Common myeloid progenitor, CD34-positive (primary cell): ENCODE measurements at regions of chr16 and their contacts with region 1.

Region 1: DNA sequence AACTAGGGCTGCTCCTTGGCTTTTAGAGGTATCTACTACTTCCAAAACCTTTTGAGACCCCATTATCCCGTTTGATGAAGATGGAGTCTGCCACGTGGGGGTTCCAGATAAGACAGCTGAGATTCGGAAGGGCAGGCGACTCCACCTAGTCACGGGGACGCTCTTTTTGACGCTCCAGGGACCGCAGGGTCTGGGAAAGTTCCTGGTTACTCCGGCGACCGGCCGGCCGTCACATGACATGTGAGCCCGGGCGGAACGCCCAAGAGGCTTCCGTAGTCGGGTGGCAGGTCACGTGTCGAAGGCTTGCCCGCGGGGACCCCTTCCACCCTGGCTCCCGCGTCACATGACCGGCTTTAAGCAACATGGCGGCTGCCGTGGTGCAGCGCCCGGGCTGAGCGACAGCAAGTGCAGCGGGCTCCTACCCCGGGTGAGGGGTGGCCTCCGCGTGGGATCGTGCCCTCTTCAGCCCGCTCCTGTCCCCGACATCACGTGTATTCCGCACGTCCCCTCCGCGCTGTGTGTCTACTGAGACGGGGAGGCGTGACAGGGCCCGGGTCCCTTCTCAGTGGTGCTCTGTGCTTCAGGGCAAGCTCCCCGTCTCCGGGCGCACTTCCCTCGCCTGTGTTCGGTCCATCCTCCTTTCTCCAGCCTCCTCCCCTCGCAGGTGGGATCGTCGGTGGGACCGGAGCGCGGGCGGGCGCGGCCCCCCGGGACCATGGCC is at the start of gene SPNS1:
- DNase-seq: peak; percentile 94 to 96 (median 96)
- H3K4me3 ChIP-seq: peak within 1 kb of the TSS; percentile 82 to 99 (median 96)
- H3K27ac ChIP-seq: peak within 1 kb of the TSS; percentile 72 to 83
- H3K4me1 ChIP-seq: peaks cover 0 to 15% (median 12%) of the 10 kb centered on the region in 4 experiments
- H3K27me3 ChIP-seq: no peaks in the 10 kb centered on the region

Region 2: GRCh38 chr16:28873536-28874201 is 100.9 kb before region 1 on chr16:
- CTCF ChIA-PET with region 1: no interaction called
- POLR2A ChIA-PET with region 1: no interaction called
- DNase-seq: peak; percentile 44 to 70 (median 61)
- H3K4me3 ChIP-seq: no peak overlapping the region
- H3K27ac ChIP-seq: no peak overlapping the region
- H3K4me1 ChIP-seq: peaks cover 0 to 18% (median under 1%) of the 10 kb centered on the region in 4 experiments
- H3K27me3 ChIP-seq: no peaks in the 10 kb centered on the region

Region 3: DNA sequence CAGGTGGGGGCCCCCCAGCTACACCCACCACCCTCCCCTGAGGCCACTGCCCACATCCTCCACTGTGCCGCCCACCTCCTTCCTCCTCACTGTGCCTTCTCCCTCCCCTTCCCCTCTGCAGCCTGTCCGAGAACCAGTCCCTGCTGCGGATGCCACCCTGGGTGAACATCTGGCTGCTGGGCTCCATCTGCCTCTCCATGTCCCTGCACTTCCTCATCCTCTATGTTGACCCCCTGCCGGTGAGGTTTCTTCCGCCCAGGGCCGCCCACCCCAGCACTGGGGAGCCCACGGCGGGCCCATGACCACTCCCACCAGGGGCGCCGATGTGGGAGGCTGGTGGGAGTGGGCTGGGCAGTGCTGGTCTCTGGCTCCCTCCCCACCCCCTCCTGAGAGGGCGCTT is 71.7 kb before region 1 on chr16:
- CTCF ChIA-PET with region 1: no interaction called
- POLR2A ChIA-PET with region 1: no interaction called
- DNase-seq: peak in 2 of 3 donors; percentile 73 to 77
- H3K4me3 ChIP-seq: peak overlapping the region in 4 of 7 experiments; percentile 16 to 52 (median 49)
- H3K27ac ChIP-seq: no peak overlapping the region
- H3K4me1 ChIP-seq: peaks cover 0 to 17% (median 16%) of the 10 kb centered on the region in 4 experiments
- H3K27me3 ChIP-seq: no peaks in the 10 kb centered on the region

Region 4: GRCh38 chr16:28964072-28964471 is 10.5 kb before region 1 on chr16:
- CTCF ChIA-PET with region 1: interaction called, 11 read pairs
- POLR2A ChIA-PET with region 1: no interaction called
- DNase-seq: no peak
- H3K4me3 ChIP-seq: no peak overlapping the region
- H3K27ac ChIP-seq: no peak overlapping the region
- H3K4me1 ChIP-seq: no peaks in the 10 kb centered on the region
- H3K27me3 ChIP-seq: no peaks in the 10 kb centered on the region